Activated T-helper 1 cell treated with anti-CD3 and anti-CD28 coated beads, Interleukin-12 subunit alpha, Interleukin-12 subunit beta, Interleukin-2, Interleukin-4 antibody, amounts not matched to agents 30 ng/mL and 10 ng/mL and 1 ng/mL, durations not matched to agents 14 hours and 24 hours and 36 hours (primary cell): ENCODE measurements at regions of chr2 and their contacts with region 1.

Region 1: DNA sequence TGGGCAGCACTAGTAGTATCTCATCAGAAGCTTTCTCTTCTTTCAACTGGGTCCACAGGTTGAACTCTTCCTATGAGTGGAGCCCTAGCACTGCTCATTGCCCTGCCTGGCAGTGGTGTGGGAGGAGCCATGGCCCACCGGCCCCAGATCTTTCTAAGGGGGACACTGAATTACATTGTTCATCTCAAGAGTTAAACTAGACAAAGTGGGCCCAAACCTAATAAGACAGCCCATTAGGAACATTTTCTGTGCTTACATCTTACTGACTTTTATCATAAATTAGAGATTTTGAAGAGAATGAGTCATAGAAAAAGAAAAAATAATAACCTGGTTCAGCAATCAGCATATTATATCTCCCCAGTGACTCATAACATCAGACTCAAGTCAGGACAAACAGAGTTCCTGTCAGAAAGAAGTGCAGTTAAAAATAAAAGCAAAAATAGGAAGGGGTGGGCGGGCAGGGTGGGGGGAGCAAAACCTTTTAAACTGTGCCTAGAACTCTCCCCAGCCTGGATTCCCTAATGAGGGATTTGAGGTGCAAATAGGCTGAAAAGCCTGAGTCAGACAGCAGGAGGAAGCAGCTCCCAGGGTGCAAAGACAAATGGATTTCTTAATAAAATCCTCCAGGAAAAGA is 161.6 kb upstream of the TRIB2 start:
- DNase-seq: no peak
- H3K4me3 Mint-ChIP-seq: peak overlapping the region; percentile 44
- H3K27ac Mint-ChIP-seq: peak overlapping the region; percentile 88
- H3K4me1 Mint-ChIP-seq: peaks cover 41% of the 10 kb centered on the region
- H3K27me3 Mint-ChIP-seq: no peaks in the 10 kb centered on the region

Region 2: GRCh38 chr2:12456293-12457151 is 98.6 kb before region 1 on chr2:
- intact Hi-C with region 1: loop called (anchors 1 kb)
- DNase-seq: peak; percentile 40
- H3K4me3 Mint-ChIP-seq: peak overlapping the region; percentile 66
- H3K27ac Mint-ChIP-seq: peak overlapping the region; percentile 83
- H3K4me1 Mint-ChIP-seq: peaks cover 33% of the 10 kb centered on the region
- H3K27me3 Mint-ChIP-seq: no peaks in the 10 kb centered on the region

Region 3: DNA sequence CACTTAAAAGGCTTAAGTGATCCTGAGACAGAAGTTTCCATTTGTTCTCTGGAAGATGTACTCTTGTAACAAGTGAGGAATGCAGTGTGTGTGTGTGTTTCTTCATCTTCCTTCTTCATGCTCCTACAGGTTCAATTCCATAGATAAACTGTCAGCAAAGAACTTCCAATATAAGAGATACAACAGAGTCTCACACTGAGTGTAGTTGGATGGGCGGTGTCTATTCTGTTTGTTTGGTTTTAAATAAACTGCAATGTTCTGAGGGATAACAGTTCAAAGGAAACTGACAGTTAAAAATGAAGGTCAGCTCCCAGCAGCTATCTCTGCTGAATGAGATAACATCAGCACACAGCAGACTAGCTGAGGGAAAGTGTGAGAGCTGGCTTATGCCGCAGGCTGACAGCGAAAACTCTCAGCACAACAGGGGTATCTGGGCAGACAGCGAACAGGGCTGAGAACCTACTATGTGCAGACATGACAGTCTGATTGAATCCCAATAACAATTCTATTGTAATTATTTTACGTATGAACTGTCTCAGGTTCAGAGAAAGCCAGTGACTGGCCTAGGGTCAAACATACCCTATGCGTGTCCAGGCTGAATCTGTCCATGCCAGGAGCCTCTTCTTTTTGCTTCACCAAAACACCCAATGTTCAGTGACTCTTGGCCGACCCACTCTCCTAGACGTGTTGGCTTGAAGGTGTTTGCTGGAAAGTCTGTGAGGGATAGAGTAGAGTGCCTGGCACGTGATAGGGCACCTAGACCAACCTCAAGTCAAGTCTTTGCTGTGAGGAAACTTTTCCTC is 40.3 kb before region 1 on chr2:
- intact Hi-C with region 1: loop called (anchors 2 kb)
- DNase-seq: no peak
- H3K4me3 Mint-ChIP-seq: peak overlapping the region; percentile 54
- H3K27ac Mint-ChIP-seq: no peak overlapping the region
- H3K4me1 Mint-ChIP-seq: peaks cover 35% of the 10 kb centered on the region
- H3K27me3 Mint-ChIP-seq: peaks cover 10% of the 10 kb centered on the region